CD4-positive, alpha-beta memory T cell (primary cell): ENCODE measurements at regions of chr18 and their contacts with region 1.

Region 1: GRCh38 chr18:9102508-9103375 is at the start of gene NDUFV2:
- DNase-seq: peak; percentile 95 to 97 (median 97)
- H3K4me3 ChIP-seq: peak within 1 kb of the TSS; percentile 81 to 92
- H3K4me3 Mint-ChIP-seq: peak within 1 kb of the TSS; percentile 89 to 96 (median 94)
- H3K27ac ChIP-seq: peak within 1 kb of the TSS; percentile 82
- H3K27ac Mint-ChIP-seq: peak within 1 kb of the TSS; percentile 94 to 99 (median 97)
- H3K4me1 ChIP-seq: peaks cover 55% of the 10 kb centered on the region
- H3K4me1 Mint-ChIP-seq: peaks cover 37 to 65% (median 52%) of the 10 kb centered on the region in 4 donors
- H3K27me3 ChIP-seq: no peaks in the 10 kb centered on the region
- H3K27me3 Mint-ChIP-seq: no peaks in the 10 kb centered on the region
- total RNA-seq, gene NDUFV2: 135 TPM

Region 2: DNA sequence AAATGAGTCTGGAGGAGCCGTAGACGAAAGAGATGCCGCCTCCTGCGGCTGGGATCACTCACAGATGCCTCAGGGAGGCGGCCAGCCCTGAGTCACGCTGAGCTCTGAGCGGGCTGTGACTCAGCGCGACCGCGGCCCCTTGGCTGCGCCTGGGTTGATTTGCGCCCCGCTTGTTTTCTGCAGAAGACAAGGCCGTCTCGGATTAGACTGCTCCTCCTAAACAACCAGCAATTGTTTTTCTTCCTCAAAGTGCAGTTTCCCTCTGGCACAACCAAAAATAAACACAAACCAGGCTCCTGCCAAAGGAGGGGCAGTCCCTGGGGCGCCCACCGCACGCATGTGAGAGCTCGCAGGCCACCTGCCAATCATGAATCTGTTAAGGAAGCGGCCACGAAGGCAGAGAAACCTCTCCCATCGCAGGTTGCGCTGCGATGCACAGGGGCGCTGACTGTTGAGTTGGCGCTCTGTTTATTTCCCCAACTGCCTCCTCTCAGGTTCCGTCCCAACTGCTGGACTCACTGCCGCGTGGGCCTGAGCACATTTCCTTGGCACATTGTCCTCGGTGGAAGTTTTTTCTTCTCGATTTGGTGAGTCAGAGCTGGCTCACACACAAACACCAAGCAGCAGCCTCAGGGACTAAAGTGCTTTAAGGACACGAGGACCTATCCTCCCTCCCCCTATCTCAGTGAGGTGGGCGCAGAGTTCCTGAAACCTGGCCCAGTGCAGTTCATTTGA is 85.4 kb before region 1 on chr18:
- CTCF ChIA-PET with region 1: no interaction called
- POLR2A ChIA-PET with region 1: no interaction called
- intact Hi-C with region 1: no loop called
- DNase-seq: peak in 4 of 5 donors; percentile 0 to 51 (median 2)
- H3K4me3 ChIP-seq: no peak overlapping the region
- H3K4me3 Mint-ChIP-seq: peak overlapping the region; percentile 43 to 80 (median 70)
- H3K27ac ChIP-seq: no peak overlapping the region
- H3K27ac Mint-ChIP-seq: no peak overlapping the region
- H3K4me1 ChIP-seq: peaks cover 12% of the 10 kb centered on the region
- H3K4me1 Mint-ChIP-seq: peaks cover 0 to 16% (median 2%) of the 10 kb centered on the region in 4 donors
- H3K27me3 ChIP-seq: no peaks in the 10 kb centered on the region
- H3K27me3 Mint-ChIP-seq: no peaks in the 10 kb centered on the region

Region 3: DNA sequence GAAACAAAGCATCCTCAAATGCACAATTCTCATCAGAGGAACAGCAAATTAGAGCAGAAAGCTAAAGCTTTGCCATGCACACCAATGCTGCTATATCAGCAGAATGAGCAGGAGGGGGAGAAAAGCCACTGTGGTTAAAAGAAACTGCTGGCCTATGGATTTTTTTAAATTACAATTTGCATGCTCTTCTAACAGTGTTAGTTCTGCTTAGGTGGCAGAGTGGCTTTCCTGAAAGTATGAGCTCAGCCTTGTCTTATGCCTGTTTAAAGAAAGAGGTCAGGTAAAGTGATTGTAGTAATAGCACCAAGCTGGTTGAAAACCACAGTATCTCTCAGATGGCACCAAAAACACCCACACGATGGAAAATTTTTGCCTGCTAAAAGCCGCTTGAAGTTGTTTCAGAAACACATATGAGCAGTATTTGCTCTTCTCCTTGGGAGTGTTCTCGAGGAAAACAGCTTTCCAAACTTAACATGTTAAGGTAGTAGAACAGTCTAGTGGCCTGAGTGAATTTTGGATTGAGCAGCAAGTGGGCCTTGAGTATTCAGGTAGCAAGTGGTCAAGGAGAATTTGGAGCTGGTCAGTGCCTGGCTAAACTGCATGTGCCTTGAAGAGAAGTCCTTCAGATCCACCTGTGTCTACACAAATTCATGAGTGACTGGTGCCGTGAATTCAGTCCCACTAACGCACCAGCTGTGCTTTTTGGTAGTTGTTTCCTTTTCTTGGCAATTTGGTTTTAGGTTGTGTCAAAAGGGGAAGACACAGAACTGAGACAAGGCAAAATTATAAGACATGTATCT is 19.8 kb before region 1 on chr18:
- CTCF ChIA-PET with region 1: interaction called, 14 read pairs
- POLR2A ChIA-PET with region 1: interaction called, 73 read pairs
- intact Hi-C with region 1: loop called (anchors 1 kb)
- DNase-seq: peak; percentile 53 to 81 (median 66)
- H3K4me3 ChIP-seq: peak overlapping the region in 1 of 2 donors; percentile 25
- H3K4me3 Mint-ChIP-seq: peak overlapping the region; percentile 43 to 84 (median 68)
- H3K27ac ChIP-seq: peak overlapping the region; percentile 58
- H3K27ac Mint-ChIP-seq: peak overlapping the region; percentile 92 to 97 (median 95)
- H3K4me1 ChIP-seq: peaks cover 54% of the 10 kb centered on the region
- H3K4me1 Mint-ChIP-seq: peaks cover 27 to 50% (median 40%) of the 10 kb centered on the region in 4 donors
- H3K27me3 ChIP-seq: no peaks in the 10 kb centered on the region
- H3K27me3 Mint-ChIP-seq: no peaks in the 10 kb centered on the region

Region 4: GRCh38 chr18:9117980-9118841 is 15.5 kb after region 1 on chr18:
- CTCF ChIA-PET with region 1: interaction called, 58 read pairs
- POLR2A ChIA-PET with region 1: interaction called, 285 read pairs
- intact Hi-C with region 1: loop called (anchors 1 kb)
- DNase-seq: peak in 4 of 5 donors; percentile 47 to 54 (median 52)
- H3K4me3 ChIP-seq: peak overlapping the region; percentile 8 to 28
- H3K4me3 Mint-ChIP-seq: peak overlapping the region; percentile 62 to 91 (median 84)
- H3K27ac ChIP-seq: peak overlapping the region; percentile 80
- H3K27ac Mint-ChIP-seq: peak overlapping the region; percentile 96 to 100 (median 98)
- H3K4me1 ChIP-seq: peaks cover 98% of the 10 kb centered on the region
- H3K4me1 Mint-ChIP-seq: peaks cover 51 to 86% (median 69%) of the 10 kb centered on the region in 4 donors
- H3K27me3 ChIP-seq: no peaks in the 10 kb centered on the region
- H3K27me3 Mint-ChIP-seq: no peaks in the 10 kb centered on the region

Region 5: GRCh38 chr18:9147440-9148202 is 44.9 kb after region 1 on chr18:
- CTCF ChIA-PET with region 1: interaction called, 20 read pairs
- POLR2A ChIA-PET with region 1: interaction called, 823 read pairs
- intact Hi-C with region 1: loop called (anchors 1 kb)
- DNase-seq: peak; percentile 55 to 67 (median 61)
- H3K4me3 ChIP-seq: no peak overlapping the region
- H3K4me3 Mint-ChIP-seq: peak overlapping the region in 6 of 8 donors; percentile 33 to 82 (median 67)
- H3K27ac ChIP-seq: peak overlapping the region; percentile 34
- H3K27ac Mint-ChIP-seq: peak overlapping the region; percentile 66 to 96 (median 76)
- H3K4me1 ChIP-seq: peaks cover 92% of the 10 kb centered on the region
- H3K4me1 Mint-ChIP-seq: peaks cover 55 to 87% (median 67%) of the 10 kb centered on the region in 4 donors
- H3K27me3 ChIP-seq: no peaks in the 10 kb centered on the region
- H3K27me3 Mint-ChIP-seq: no peaks in the 10 kb centered on the region

Region 6: GRCh38 chr18:9334329-9334972 is 231.7 kb after region 1 on chr18 and contains the start of gene TWSG1:
- CTCF ChIA-PET with region 1: interaction called, 4 read pairs
- POLR2A ChIA-PET with region 1: interaction called, 8 read pairs
- intact Hi-C with region 1: loop called (anchors 1 kb)
- DNase-seq: peak; percentile 90 to 94 (median 91)
- H3K4me3 ChIP-seq: peak within 1 kb of the TSS; percentile 76 to 90
- H3K4me3 Mint-ChIP-seq: peak within 1 kb of the TSS; percentile 85 to 96 (median 90)
- H3K27ac ChIP-seq: peak within 1 kb of the TSS; percentile 57
- H3K27ac Mint-ChIP-seq: peak within 1 kb of the TSS; percentile 83 to 93 (median 91)
- H3K4me1 ChIP-seq: peaks cover 17% of the 10 kb centered on the region
- H3K4me1 Mint-ChIP-seq: peaks cover 8 to 27% (median 18%) of the 10 kb centered on the region in 4 donors
- H3K27me3 ChIP-seq: no peaks in the 10 kb centered on the region
- H3K27me3 Mint-ChIP-seq: peaks cover 1 to 6% of the 10 kb centered on the region in 2 donors
- total RNA-seq, gene TWSG1: 5.1 to 6.0 TPM

Region 7: GRCh38 chr18:9474983-9475642 is 372.4 kb after region 1 on chr18 and contains the start of gene RALBP1:
- CTCF ChIA-PET with region 1: no interaction called
- POLR2A ChIA-PET with region 1: no interaction called
- intact Hi-C with region 1: loop called (anchors 1 kb)
- DNase-seq: peak; percentile 96 to 98 (median 97)
- H3K4me3 ChIP-seq: peak within 1 kb of the TSS; percentile 86
- H3K4me3 Mint-ChIP-seq: peak within 1 kb of the TSS; percentile 94 to 99 (median 98)
- H3K27ac ChIP-seq: peak within 1 kb of the TSS; percentile 79
- H3K27ac Mint-ChIP-seq: peak within 1 kb of the TSS; percentile 95 to 98 (median 96)
- H3K4me1 ChIP-seq: peaks cover 24% of the 10 kb centered on the region
- H3K4me1 Mint-ChIP-seq: peaks cover 25 to 46% (median 33%) of the 10 kb centered on the region in 4 donors
- H3K27me3 ChIP-seq: no peaks in the 10 kb centered on the region
- H3K27me3 Mint-ChIP-seq: peaks cover 3 to 5% of the 10 kb centered on the region in 2 donors
- total RNA-seq, gene RALBP1: 44.9 to 49.9 TPM